Activated CD8-positive, alpha-beta T cell treated with anti-CD3 and anti-CD28 coated beads for 36 hours (primary cell): ENCODE measurements at regions of chr16 and their contacts with region 1.

Region 1: GRCh38 chr16:67546761-67547422 is 15.4 kb upstream of the CTCF start:
- DNase-seq: peak; percentile 79
- ATAC-seq: peak; percentile 32
- H3K4me3 Mint-ChIP-seq: no peak overlapping the region
- H3K27ac Mint-ChIP-seq: peak overlapping the region; percentile 90
- H3K4me1 Mint-ChIP-seq: peaks cover 40% of the 10 kb centered on the region
- H3K27me3 Mint-ChIP-seq: no peaks in the 10 kb centered on the region
- CTCF ChIP-seq: peak; percentile 99

Region 2: DNA sequence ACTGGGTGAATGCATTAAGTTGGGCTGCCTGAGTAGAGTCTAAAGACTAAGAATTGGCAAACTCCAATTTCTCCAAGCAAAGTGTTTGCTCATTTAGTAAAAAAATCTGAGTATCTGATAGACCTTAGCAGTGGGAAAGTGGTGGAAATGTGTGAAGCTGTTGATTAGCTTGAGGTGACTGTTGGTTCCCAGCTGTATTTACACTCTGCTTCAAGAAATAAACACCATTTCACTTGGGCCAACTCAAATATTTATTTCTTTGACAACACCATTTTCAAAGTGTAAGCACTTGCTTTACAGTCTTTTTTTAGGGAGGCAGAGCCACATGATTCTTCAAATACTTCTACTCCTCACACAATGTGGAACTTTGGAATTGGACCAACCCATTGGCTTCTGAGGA is 229.0 kb before region 1 on chr16:
- CTCF ChIA-PET with region 1: no interaction called
- POLR2A ChIA-PET with region 1: no interaction called
- intact Hi-C with region 1: no loop called
- DNase-seq: no peak
- ATAC-seq: no peak
- H3K4me3 Mint-ChIP-seq: no peak overlapping the region
- H3K27ac Mint-ChIP-seq: no peak overlapping the region
- H3K4me1 Mint-ChIP-seq: peaks cover 10% of the 10 kb centered on the region
- H3K27me3 Mint-ChIP-seq: peaks cover 22% of the 10 kb centered on the region
- CTCF ChIP-seq: no peak

Region 3: DNA sequence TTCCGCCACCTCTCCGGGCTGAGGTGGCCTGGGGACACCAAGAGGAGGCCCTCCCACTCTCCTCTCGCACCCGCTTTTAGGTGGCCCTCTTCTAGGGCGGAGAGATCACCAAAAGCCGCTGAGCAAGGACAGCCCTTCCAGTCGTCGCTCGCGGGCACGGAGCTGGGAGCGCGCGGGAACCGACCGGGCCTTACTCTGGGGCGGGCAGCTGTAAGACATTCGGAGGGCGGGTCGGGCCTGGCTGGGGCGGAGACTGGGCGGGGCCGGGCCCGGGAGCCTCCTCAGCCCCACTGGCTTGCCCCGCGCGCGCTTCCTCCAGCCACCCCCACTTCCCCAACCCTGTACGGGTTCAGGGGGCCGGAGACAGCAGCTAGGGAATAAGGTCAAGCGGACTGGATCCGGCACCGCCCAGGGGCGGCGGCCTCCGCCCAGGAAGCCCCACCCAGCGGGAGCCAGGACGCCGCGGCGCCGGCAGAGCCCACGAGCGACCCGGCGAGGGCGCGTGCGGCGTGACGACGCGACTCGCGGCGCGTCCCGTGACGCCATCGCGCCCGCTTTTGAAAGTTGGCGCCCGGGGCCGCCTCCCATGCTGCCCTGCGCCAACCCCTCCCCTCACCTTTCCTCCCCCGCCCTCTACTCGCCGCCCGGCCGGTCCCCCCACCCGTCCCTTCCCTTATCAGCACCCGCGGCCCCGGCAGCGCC is 15.1 kb after region 1 on chr16:
- CTCF ChIA-PET with region 1: interaction called, 129 read pairs
- POLR2A ChIA-PET with region 1: interaction called, 77 read pairs
- intact Hi-C with region 1: no loop called
- DNase-seq: peak; percentile 98
- ATAC-seq: peak; percentile 88
- H3K4me3 Mint-ChIP-seq: peak overlapping the region; percentile 82
- H3K27ac Mint-ChIP-seq: peak overlapping the region; percentile 91
- H3K4me1 Mint-ChIP-seq: peaks cover 44% of the 10 kb centered on the region
- H3K27me3 Mint-ChIP-seq: no peaks in the 10 kb centered on the region
- CTCF ChIP-seq: no peak

Region 4: GRCh38 chr16:67595033-67595355 is 48.1 kb after region 1 on chr16:
- CTCF ChIA-PET with region 1: interaction called, 18 read pairs
- POLR2A ChIA-PET with region 1: no interaction called
- intact Hi-C with region 1: no loop called
- DNase-seq: peak; percentile 21
- ATAC-seq: no peak
- H3K4me3 Mint-ChIP-seq: no peak overlapping the region
- H3K27ac Mint-ChIP-seq: peak overlapping the region; percentile 61
- H3K4me1 Mint-ChIP-seq: peaks cover 39% of the 10 kb centered on the region
- H3K27me3 Mint-ChIP-seq: no peaks in the 10 kb centered on the region
- CTCF ChIP-seq: no peak

Region 5: GRCh38 chr16:67628216-67628615 is 81.3 kb after region 1 on chr16:
- CTCF ChIA-PET with region 1: interaction called, 12 read pairs
- POLR2A ChIA-PET with region 1: no interaction called
- intact Hi-C with region 1: no loop called
- DNase-seq: no peak
- ATAC-seq: no peak
- H3K4me3 Mint-ChIP-seq: no peak overlapping the region
- H3K27ac Mint-ChIP-seq: no peak overlapping the region
- H3K4me1 Mint-ChIP-seq: no peaks in the 10 kb centered on the region
- H3K27me3 Mint-ChIP-seq: no peaks in the 10 kb centered on the region
- CTCF ChIP-seq: no peak

Region 6: DNA sequence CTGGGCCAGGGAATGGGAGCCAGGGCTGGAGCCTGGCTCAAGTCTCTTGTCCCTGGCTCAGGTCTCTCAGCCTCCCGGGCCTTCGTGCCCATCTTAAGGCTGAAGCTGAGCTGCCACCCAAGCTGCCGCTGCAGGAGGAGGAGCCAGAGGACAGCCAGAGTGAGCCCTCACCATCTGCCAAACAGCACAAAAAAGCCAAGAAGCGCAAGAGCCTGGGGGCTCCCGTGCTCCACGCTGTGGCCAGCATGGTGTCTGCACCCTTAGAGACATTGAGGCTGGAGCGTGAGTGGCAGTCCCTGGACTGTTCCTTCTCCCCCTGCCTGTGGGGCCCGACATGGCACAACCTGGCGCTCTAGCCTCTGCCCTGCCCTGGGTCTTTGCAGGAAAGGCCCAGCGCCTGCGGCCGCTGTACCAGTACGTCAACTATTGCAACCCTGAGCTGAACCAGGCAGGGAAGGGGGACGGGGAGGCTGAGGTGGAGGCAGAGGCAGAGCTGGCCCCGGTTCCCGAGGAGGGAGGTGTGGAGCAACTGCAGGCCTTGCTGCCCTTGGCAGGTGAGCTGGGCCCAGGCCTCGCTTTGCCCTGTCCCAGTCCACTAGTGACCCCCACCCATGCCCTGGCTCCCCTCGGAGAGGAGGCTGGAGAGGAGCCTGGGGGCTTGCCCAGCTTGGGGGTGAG is 121.1 kb after region 1 on chr16:
- CTCF ChIA-PET with region 1: interaction called, 42 read pairs
- POLR2A ChIA-PET with region 1: no interaction called
- intact Hi-C with region 1: no loop called
- DNase-seq: peak; percentile 92
- ATAC-seq: peak; percentile 92
- H3K4me3 Mint-ChIP-seq: peak overlapping the region; percentile 80
- H3K27ac Mint-ChIP-seq: no peak overlapping the region
- H3K4me1 Mint-ChIP-seq: peaks cover 11% of the 10 kb centered on the region
- H3K27me3 Mint-ChIP-seq: no peaks in the 10 kb centered on the region
- CTCF ChIP-seq: peak; percentile 73